ENCODE measurements at regions of chrX and their contacts with region 1.

Region 1: DNA sequence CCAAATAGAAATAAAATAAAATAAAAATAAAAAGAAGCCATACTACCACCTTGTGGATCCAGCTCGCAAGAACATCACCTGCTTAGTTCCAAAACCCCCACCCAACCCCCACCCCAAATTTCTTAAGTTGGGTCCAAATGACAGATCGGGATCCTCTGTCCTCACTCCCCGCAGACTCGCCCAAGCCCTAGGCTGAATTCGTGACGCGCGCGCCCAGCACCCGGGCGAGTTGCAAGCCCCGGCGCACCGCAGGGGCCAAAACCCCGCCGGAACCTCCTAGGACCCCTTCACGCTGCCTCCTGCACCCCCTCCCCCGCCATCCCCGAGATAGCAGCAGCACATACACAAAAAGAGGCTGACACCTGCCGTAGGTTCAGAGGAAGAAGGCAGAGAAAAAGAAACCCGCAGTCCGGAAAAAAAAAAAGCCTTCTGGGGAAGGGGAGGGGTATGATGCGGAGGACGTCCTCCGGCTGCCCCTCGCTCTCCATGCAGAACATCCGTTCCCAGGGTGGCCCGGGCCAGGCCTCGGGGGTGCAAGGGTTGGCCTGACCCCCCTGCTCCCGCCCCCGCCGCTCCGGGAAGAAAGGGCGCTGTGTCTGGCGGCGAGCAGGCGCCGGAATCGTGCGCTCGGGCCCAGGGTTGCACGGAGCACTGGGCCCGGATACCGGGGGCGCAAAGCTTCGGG is 2.6 kb downstream of the NLGN4X start:
- DNase-seq: no peak
- H3K4me3 Mint-ChIP-seq: peak overlapping the region; percentile 71
- H3K27ac Mint-ChIP-seq: no peak overlapping the region
- H3K4me1 Mint-ChIP-seq: no peaks in the 10 kb centered on the region
- H3K27me3 Mint-ChIP-seq: peaks cover 1% of the 10 kb centered on the region
- CTCF ChIP-seq: no peak

Region 2: DNA sequence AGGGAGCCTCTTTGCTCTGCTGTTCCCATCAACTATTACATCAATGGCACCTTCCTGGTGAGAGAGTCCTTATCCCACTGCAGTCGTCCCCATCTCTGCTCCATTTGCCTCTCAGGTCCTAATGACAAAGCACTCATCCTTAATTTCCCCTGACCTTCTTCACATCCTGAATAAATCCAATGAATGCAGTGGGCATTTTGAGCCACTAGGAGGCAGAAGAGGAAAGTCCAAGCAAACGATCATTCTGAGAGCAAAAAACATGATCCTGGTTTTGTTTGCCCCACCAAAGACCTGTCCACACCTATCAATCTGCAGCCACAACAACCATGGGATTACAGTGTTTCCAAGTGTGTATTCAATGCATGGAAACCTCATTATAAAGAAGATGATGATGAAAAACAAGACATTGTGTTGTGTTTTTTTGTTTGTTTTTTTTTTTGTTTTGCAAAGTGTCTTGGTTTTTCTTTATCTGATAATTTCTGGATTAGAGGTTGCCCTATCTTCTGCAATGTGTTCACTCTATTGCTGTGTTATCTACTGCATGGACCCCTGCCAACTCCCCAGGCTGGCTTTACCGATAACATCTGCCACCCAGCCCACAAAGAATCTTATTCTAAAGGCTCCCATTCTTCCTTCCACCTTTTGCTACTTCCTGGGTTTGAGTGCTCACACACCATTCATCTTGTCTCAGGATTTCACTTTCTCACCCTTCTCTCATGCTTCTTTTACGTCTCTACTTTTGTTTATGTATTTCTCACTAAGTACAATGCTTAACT is 204.5 kb before region 1 on chrX:
- CTCF ChIA-PET with region 1: interaction called, 4 read pairs
- POLR2A ChIA-PET with region 1: no interaction called
- intact Hi-C with region 1: loop called (anchors 1 kb)
- DNase-seq: peak; percentile 11
- H3K4me3 Mint-ChIP-seq: no peak overlapping the region
- H3K27ac Mint-ChIP-seq: no peak overlapping the region
- H3K4me1 Mint-ChIP-seq: peaks cover 9% of the 10 kb centered on the region
- H3K27me3 Mint-ChIP-seq: no peaks in the 10 kb centered on the region
- CTCF ChIP-seq: peak; percentile 61